ENCODE measurements at regions of chr3 and their contacts with region 1.

Region 1: DNA sequence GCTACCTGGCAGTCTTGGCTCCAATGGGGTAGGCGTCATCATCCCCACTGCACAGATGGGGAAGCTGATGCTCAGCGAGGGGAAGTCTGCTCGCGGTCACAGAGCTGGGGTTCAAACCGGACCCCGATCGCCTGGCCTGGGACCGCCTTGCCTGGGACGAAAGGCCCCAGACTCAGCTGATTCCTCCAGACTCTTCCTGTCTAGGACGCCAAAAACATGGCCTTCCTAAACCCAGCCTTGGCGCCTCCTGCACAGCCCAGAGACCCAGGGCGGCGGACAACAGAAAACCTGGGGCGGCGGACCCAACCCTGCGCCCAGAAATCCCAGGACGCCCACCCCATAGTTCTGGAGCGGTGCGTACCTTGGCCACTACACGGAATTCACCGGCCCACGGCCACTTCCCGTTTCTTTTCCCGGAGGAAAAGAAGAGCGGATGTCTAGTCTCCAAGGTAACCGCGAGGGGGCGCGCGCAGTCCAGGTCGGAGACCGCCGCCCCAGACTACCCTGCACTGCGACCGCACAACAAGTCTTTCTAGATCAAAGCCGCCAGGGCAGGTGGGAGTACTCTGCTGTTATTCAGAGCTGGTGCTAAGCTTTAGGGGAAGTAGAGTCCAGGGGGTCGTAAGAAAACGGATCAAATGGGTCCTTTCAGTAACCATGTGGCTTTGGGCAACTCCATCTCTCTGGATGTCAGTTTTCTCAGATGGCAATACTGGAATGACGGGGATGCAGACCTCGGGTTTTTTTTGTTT is 4.9 kb upstream of the IL17RD start:
- DNase-seq: peak; percentile 80
- H3K4me3 Mint-ChIP-seq: peak overlapping the region; percentile 52
- H3K27ac Mint-ChIP-seq: no peak overlapping the region
- H3K4me1 Mint-ChIP-seq: peaks cover 7% of the 10 kb centered on the region
- H3K27me3 Mint-ChIP-seq: peaks cover 16% of the 10 kb centered on the region
- CTCF ChIP-seq: peak; percentile 81

Region 2: GRCh38 chr3:56573501-56573900 is 596.5 kb before region 1 on chr3:
- CTCF ChIA-PET with region 1: no interaction called
- POLR2A ChIA-PET with region 1: no interaction called
- intact Hi-C with region 1: no loop called
- DNase-seq: no peak
- H3K4me3 Mint-ChIP-seq: no peak overlapping the region
- H3K27ac Mint-ChIP-seq: no peak overlapping the region
- H3K4me1 Mint-ChIP-seq: no peaks in the 10 kb centered on the region
- H3K27me3 Mint-ChIP-seq: no peaks in the 10 kb centered on the region
- CTCF ChIP-seq: no peak

Region 3: GRCh38 chr3:57100046-57100695 is 69.9 kb before region 1 on chr3:
- CTCF ChIA-PET with region 1: interaction called, 10 read pairs
- POLR2A ChIA-PET with region 1: interaction called, 4 read pairs
- intact Hi-C with region 1: loop called (anchors 2 kb)
- DNase-seq: peak; percentile 83
- H3K4me3 Mint-ChIP-seq: no peak overlapping the region
- H3K27ac Mint-ChIP-seq: no peak overlapping the region
- H3K4me1 Mint-ChIP-seq: no peaks in the 10 kb centered on the region
- H3K27me3 Mint-ChIP-seq: no peaks in the 10 kb centered on the region
- CTCF ChIP-seq: peak; percentile 82

Region 4: DNA sequence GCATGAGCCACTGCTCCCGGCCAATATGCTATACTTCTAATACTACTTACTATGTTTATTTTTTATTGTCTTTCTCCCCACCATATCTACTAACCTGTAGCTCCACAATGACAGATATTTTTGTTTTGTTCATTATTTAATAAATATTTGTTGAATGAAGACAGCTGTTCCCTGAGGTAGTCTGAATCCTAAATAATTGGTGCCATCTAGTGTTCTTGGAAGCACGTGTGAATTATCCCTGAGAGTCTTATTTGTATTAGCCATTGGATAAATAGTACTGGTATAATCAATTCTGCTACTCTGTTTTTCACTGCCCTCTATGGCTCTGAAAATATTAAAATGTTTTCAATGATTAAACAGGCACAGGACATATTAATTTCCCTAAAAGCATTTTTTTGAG is 51.8 kb after region 1 on chr3:
- CTCF ChIA-PET with region 1: interaction called, 53 read pairs
- POLR2A ChIA-PET with region 1: interaction called, 7 read pairs
- intact Hi-C with region 1: loop called (anchors 1 kb)
- DNase-seq: peak; percentile 39
- H3K4me3 Mint-ChIP-seq: no peak overlapping the region
- H3K27ac Mint-ChIP-seq: no peak overlapping the region
- H3K4me1 Mint-ChIP-seq: peaks cover 5% of the 10 kb centered on the region
- H3K27me3 Mint-ChIP-seq: no peaks in the 10 kb centered on the region
- CTCF ChIP-seq: peak; percentile 40

Region 5: DNA sequence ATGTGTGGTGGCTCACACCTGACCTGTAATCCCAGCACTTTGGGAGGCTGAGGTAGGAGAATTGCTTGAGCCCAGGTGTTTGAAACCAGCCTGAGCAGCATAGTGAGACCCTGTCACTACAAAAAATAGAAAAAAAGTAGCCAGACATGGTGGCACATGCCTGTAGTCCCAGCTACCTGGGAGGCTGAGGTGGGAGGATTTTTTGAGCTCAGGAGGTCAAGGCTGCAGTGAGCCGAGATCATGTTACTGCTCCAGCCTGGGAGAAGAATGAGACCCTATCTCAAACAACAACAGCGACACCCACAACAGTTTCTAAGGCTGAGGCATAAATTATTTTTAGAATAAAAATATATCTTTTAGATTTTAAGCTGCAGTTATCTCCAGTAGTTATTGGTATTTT is 63.8 kb after region 1 on chr3:
- CTCF ChIA-PET with region 1: interaction called, 12 read pairs
- POLR2A ChIA-PET with region 1: interaction called, 6 read pairs
- intact Hi-C with region 1: no loop called
- DNase-seq: no peak
- H3K4me3 Mint-ChIP-seq: no peak overlapping the region
- H3K27ac Mint-ChIP-seq: no peak overlapping the region
- H3K4me1 Mint-ChIP-seq: peaks cover 5% of the 10 kb centered on the region
- H3K27me3 Mint-ChIP-seq: no peaks in the 10 kb centered on the region
- CTCF ChIP-seq: no peak

Region 6: GRCh38 chr3:57852896-57853295 is 682.8 kb after region 1 on chr3:
- CTCF ChIA-PET with region 1: no interaction called
- POLR2A ChIA-PET with region 1: no interaction called
- intact Hi-C with region 1: loop called (anchors 10 kb)
- DNase-seq: peak; percentile 25
- H3K4me3 Mint-ChIP-seq: no peak overlapping the region
- H3K27ac Mint-ChIP-seq: no peak overlapping the region
- H3K4me1 Mint-ChIP-seq: peaks cover 6% of the 10 kb centered on the region
- H3K27me3 Mint-ChIP-seq: no peaks in the 10 kb centered on the region
- CTCF ChIP-seq: peak; percentile 24